ENCODE measurements at regions of chr14 and their contacts with region 1.

Region 1: GRCh38 chr14:98181241-98181640 is 1090.8 kb downstream of the BCL11B start:
- DNase-seq: no peak
- H3K4me3 ChIP-seq: no peak overlapping the region
- H3K27ac ChIP-seq: no peak overlapping the region
- H3K4me1 ChIP-seq: no peaks in the 10 kb centered on the region
- H3K27me3 ChIP-seq: no peaks in the 10 kb centered on the region
- CTCF ChIP-seq: no peak
- POLR2A ChIP-seq: no peak

Region 2: DNA sequence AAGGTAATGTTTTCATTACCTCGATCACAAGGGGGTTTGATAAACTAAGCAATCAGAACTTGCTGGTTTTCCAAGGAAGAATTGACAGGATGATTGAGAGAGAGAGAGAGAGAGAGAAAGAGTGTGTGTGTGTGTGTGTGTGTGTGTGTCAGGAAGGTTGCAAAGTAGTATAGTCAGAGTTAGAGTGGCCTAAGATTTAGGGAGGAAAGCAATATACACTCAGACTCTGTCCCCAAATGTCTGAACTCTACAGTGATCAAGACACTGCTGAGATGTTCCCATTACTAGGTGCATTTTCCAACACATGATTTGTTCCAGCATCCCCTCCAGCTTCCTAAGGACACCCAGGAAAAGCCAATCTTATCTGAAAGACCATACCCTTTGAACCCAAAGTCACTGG is 16.7 kb after region 1 on chr14:
- intact Hi-C with region 1: loop called (anchors 2 kb)
- DNase-seq: no peak
- H3K4me3 ChIP-seq: no peak overlapping the region
- H3K27ac ChIP-seq: no peak overlapping the region
- H3K4me1 ChIP-seq: no peaks in the 10 kb centered on the region
- H3K27me3 ChIP-seq: no peaks in the 10 kb centered on the region
- CTCF ChIP-seq: no peak
- POLR2A ChIP-seq: no peak